Activated B cell treated with CpG ODN at 0.5 μM for 24 hours (primary cell): ENCODE measurements at regions of chr2 and their contacts with region 1.

Region 1: GRCh38 chr2:164826293-164827243 is 15.1 kb downstream of the COBLL1 start:
- DNase-seq: no peak
- ATAC-seq: peak; percentile 91
- H3K4me3 Mint-ChIP-seq: peak overlapping the region; percentile 69
- H3K27ac Mint-ChIP-seq: peak overlapping the region; percentile 85
- H3K4me1 Mint-ChIP-seq: peaks cover 30% of the 10 kb centered on the region
- H3K27me3 Mint-ChIP-seq: no peaks in the 10 kb centered on the region
- CTCF ChIP-seq: no peak

Region 2: DNA sequence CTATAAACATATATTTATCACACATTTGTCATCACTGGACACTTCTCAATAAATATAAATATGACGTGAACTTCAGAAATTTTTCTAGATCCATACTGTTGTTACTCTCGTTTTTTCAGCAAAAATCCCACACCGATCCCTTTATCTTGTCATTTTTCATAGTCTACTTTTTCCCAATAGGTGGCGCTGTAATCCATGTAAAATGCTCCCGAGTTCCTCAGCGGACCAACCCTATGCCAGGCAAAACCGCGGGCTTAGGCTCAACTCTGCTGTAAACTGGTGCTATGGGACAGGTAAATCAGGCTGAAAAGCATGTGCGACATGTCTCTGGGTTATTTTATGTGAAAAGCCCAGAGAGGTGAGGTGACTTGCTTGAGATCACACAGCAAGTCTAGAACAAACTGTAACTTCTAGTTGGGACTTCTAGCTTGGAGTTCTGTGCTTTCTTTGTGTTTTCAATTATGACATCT is 88.9 kb before region 1 on chr2:
- CTCF ChIA-PET with region 1: no interaction called
- POLR2A ChIA-PET with region 1: no interaction called
- intact Hi-C with region 1: no loop called
- DNase-seq: peak; percentile 29
- ATAC-seq: peak; percentile 62
- H3K4me3 Mint-ChIP-seq: peak overlapping the region; percentile 21
- H3K27ac Mint-ChIP-seq: peak overlapping the region; percentile 74
- H3K4me1 Mint-ChIP-seq: peaks cover 72% of the 10 kb centered on the region
- H3K27me3 Mint-ChIP-seq: no peaks in the 10 kb centered on the region
- CTCF ChIP-seq: no peak

Region 3: GRCh38 chr2:164808776-164809175 is 17.8 kb before region 1 on chr2:
- CTCF ChIA-PET with region 1: no interaction called
- POLR2A ChIA-PET with region 1: interaction called, 3 read pairs
- intact Hi-C with region 1: loop called (anchors 2 kb)
- DNase-seq: no peak
- ATAC-seq: no peak
- H3K4me3 Mint-ChIP-seq: no peak overlapping the region
- H3K27ac Mint-ChIP-seq: no peak overlapping the region
- H3K4me1 Mint-ChIP-seq: peaks cover 21% of the 10 kb centered on the region
- H3K27me3 Mint-ChIP-seq: no peaks in the 10 kb centered on the region
- CTCF ChIP-seq: no peak

Region 4: DNA sequence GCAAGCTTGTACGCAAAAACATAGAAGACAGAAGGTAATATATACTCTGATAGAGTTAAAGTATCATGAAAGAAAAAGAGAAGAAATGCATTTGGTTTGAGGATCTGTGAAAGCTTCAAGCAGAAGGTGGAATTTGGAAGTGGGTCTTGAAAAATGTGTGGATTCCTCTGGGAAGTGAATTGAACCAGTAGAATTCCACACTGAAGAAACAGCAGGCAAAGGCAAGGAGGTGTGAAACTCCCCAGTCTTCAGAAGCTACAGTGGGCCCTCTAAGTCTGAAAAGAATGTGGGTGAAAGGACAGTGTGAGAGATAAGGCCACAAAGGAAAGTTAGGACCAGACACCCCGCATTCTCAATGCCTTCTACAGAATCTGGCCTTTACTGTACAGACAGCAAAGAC is 10.5 kb before region 1 on chr2:
- CTCF ChIA-PET with region 1: no interaction called
- POLR2A ChIA-PET with region 1: interaction called, 3 read pairs
- intact Hi-C with region 1: loop called (anchors 1 kb)
- DNase-seq: no peak
- ATAC-seq: no peak
- H3K4me3 Mint-ChIP-seq: no peak overlapping the region
- H3K27ac Mint-ChIP-seq: no peak overlapping the region
- H3K4me1 Mint-ChIP-seq: peaks cover 12% of the 10 kb centered on the region
- H3K27me3 Mint-ChIP-seq: no peaks in the 10 kb centered on the region
- CTCF ChIP-seq: no peak

Region 5: GRCh38 chr2:164836907-164837306 is 10.3 kb after region 1 on chr2:
- CTCF ChIA-PET with region 1: interaction called, 3 read pairs
- POLR2A ChIA-PET with region 1: interaction called, 14 read pairs
- intact Hi-C with region 1: loop called (anchors 1 kb)
- DNase-seq: no peak
- ATAC-seq: no peak
- H3K4me3 Mint-ChIP-seq: no peak overlapping the region
- H3K27ac Mint-ChIP-seq: peak overlapping the region; percentile 18
- H3K4me1 Mint-ChIP-seq: peaks cover 55% of the 10 kb centered on the region
- H3K27me3 Mint-ChIP-seq: no peaks in the 10 kb centered on the region
- CTCF ChIP-seq: no peak